MCF 10A (cell line): ENCODE measurements at regions of chr17 and their contacts with region 1.

Region 1: GRCh38 chr17:29640413-29640812 is 17.7 kb upstream of the CORO6 start:
- DNase-seq: peak; percentile 33
- H3K4me3 Mint-ChIP-seq: no peak overlapping the region
- H3K27ac Mint-ChIP-seq: peak overlapping the region; percentile 68
- H3K4me1 Mint-ChIP-seq: peaks cover 35% of the 10 kb centered on the region
- H3K27me3 Mint-ChIP-seq: no peaks in the 10 kb centered on the region
- CTCF ChIP-seq: no peak

Region 2: GRCh38 chr17:29069526-29070041 is 570.8 kb before region 1 on chr17:
- CTCF ChIA-PET with region 1: no interaction called
- POLR2A ChIA-PET with region 1: no interaction called
- intact Hi-C with region 1: no loop called
- DNase-seq: peak; percentile 86
- H3K4me3 Mint-ChIP-seq: no peak overlapping the region
- H3K27ac Mint-ChIP-seq: no peak overlapping the region
- H3K4me1 Mint-ChIP-seq: no peaks in the 10 kb centered on the region
- H3K27me3 Mint-ChIP-seq: no peaks in the 10 kb centered on the region
- CTCF ChIP-seq: no peak

Region 3: DNA sequence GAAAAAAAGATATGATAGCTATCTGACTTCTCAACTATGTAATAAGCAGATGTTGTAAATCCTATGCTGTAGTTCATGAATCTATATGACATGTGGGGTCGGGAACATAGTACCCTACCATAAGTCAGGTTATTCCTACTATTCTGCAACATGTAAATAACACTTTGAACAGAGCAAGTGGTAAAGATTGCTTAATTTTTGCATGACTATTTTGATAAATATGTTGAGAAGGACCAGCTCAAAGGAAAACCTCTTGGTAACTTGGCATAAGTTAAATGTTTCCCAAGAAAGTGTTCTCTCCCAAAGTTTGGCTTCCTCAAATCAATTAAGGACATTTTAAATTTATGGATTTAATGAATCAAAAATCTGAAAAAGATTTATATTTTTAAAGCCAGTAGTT is 135.7 kb before region 1 on chr17:
- CTCF ChIA-PET with region 1: no interaction called
- POLR2A ChIA-PET with region 1: no interaction called
- intact Hi-C with region 1: no loop called
- DNase-seq: peak; percentile 8
- H3K4me3 Mint-ChIP-seq: no peak overlapping the region
- H3K27ac Mint-ChIP-seq: no peak overlapping the region
- H3K4me1 Mint-ChIP-seq: no peaks in the 10 kb centered on the region
- H3K27me3 Mint-ChIP-seq: no peaks in the 10 kb centered on the region
- CTCF ChIP-seq: no peak

Region 4: GRCh38 chr17:29589524-29590410 is 50.6 kb before region 1 on chr17 and contains the start of gene GIT1:
- CTCF ChIA-PET with region 1: interaction called, 8 read pairs
- POLR2A ChIA-PET with region 1: interaction called, 32 read pairs
- intact Hi-C with region 1: loop called (anchors 2 kb)
- DNase-seq: peak; percentile 83
- H3K4me3 Mint-ChIP-seq: peak within 1 kb of the TSS; percentile 83
- H3K27ac Mint-ChIP-seq: peak within 1 kb of the TSS; percentile 82
- H3K4me1 Mint-ChIP-seq: peaks cover 23% of the 10 kb centered on the region
- H3K27me3 Mint-ChIP-seq: no peaks in the 10 kb centered on the region
- CTCF ChIP-seq: no peak
- total RNA-seq, gene GIT1: 49.0 and 52.6 TPM in 2 replicates

Region 5: GRCh38 chr17:29664743-29665480 is 24.5 kb after region 1 on chr17:
- CTCF ChIA-PET with region 1: interaction called, 3 read pairs
- POLR2A ChIA-PET with region 1: interaction called, 11 read pairs
- intact Hi-C with region 1: no loop called
- DNase-seq: peak; percentile 17
- H3K4me3 Mint-ChIP-seq: no peak overlapping the region
- H3K27ac Mint-ChIP-seq: peak overlapping the region; percentile 59
- H3K4me1 Mint-ChIP-seq: no peaks in the 10 kb centered on the region
- H3K27me3 Mint-ChIP-seq: no peaks in the 10 kb centered on the region
- CTCF ChIP-seq: no peak

Region 6: GRCh38 chr17:29710891-29711418 is 70.5 kb after region 1 on chr17:
- CTCF ChIA-PET with region 1: interaction called, 5 read pairs
- POLR2A ChIA-PET with region 1: interaction called, 11 read pairs
- intact Hi-C with region 1: loop called (anchors 2 kb)
- DNase-seq: peak; percentile 73
- H3K4me3 Mint-ChIP-seq: peak overlapping the region; percentile 42
- H3K27ac Mint-ChIP-seq: peak overlapping the region; percentile 77
- H3K4me1 Mint-ChIP-seq: peaks cover 32% of the 10 kb centered on the region
- H3K27me3 Mint-ChIP-seq: no peaks in the 10 kb centered on the region
- CTCF ChIP-seq: no peak

Region 7: GRCh38 chr17:29777663-29778062 is 137.2 kb after region 1 on chr17:
- CTCF ChIA-PET with region 1: interaction called, 85 read pairs
- POLR2A ChIA-PET with region 1: interaction called, 44 read pairs
- intact Hi-C with region 1: loop called (anchors 1 kb)
- DNase-seq: no peak
- H3K4me3 Mint-ChIP-seq: no peak overlapping the region
- H3K27ac Mint-ChIP-seq: no peak overlapping the region
- H3K4me1 Mint-ChIP-seq: no peaks in the 10 kb centered on the region
- H3K27me3 Mint-ChIP-seq: no peaks in the 10 kb centered on the region
- CTCF ChIP-seq: no peak

Region 8: DNA sequence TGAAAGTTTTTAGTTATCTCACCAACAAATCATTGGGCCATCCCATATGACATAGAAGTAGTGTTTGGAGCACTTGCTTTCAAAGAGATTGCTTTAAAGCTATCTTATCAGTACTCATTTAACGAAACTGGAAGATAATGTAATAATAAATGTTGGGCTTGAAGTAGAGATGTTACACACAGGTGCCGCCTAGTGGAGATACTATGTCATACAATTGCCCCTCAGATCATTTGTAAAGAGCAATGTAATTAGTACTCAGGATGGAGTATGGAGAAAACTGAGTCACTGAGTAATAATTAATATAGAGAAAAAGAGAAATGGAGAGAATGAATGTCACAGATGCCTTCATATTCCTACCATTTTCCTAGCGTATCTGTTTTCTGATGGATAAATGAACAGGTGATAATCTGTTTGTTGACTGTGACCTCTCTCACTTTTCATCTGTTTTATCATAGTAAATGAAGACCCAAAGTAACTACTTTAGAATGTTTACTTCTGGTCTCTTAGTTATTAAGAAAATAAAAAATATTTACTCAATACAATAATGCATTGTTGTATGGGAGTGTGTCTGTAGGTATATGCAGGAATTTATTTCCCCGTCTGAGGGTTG is 381.4 kb after region 1 on chr17:
- CTCF ChIA-PET with region 1: no interaction called
- POLR2A ChIA-PET with region 1: interaction called, 5 read pairs
- intact Hi-C with region 1: loop called (anchors 1 kb)
- DNase-seq: peak; percentile 66
- H3K4me3 Mint-ChIP-seq: no peak overlapping the region
- H3K27ac Mint-ChIP-seq: no peak overlapping the region
- H3K4me1 Mint-ChIP-seq: no peaks in the 10 kb centered on the region
- H3K27me3 Mint-ChIP-seq: peaks cover 12% of the 10 kb centered on the region
- CTCF ChIP-seq: peak; percentile 73